ENCODE measurements at regions of chr12 and their contacts with region 1.

Region 1: DNA sequence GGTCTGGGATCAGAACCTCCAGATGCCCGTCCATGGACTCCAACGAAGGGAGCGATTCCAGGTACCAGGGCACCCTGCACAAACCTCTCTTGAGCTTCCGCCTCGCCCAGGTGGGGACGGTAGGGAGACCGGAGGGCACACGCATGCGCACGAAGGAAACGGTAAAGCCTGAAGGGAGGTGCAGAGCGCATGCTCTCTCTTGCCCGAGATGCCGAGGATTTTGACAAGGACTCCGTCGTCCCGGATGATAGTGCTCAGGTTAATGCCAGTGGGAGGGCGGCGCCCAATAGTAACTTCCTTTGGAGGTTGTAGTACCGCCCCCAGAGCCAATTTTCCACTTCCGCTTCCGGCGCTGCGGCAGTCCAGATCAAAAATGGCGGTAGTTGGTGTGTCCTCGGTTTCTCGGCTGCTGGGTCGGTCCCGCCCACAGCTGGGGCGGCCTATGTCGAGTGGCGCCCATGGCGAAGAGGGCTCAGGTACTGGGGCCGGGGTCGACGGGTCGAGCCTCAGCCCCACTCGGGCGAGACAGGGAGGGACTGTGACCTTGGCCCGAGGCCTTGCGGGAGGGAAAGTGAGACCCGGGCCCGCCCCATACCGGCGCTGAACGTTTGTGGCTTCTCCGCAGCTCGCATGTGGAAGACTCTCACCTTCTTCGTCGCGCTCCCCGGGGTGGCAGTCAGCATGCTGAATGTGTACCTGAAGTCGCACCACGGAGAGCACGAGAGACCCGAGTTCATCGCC is at the start of gene COX6A1:
- DNase-seq: peak; percentile 99
- ATAC-seq: peak; percentile 97
- H3K4me3 Mint-ChIP-seq: peak within 1 kb of the TSS; percentile 99
- H3K27ac Mint-ChIP-seq: peak within 1 kb of the TSS; percentile 99
- H3K4me1 Mint-ChIP-seq: peaks cover 23% of the 10 kb centered on the region
- H3K27me3 Mint-ChIP-seq: peaks cover 4% of the 10 kb centered on the region
- total RNA-seq, gene COX6A1: 424 to 495 TPM

Region 2: GRCh38 chr12:120301962-120302815 is 135.7 kb before region 1 on chr12 and contains the start of gene SIRT4:
- CTCF ChIA-PET with region 1: interaction called, 3 read pairs
- POLR2A ChIA-PET with region 1: no interaction called
- intact Hi-C with region 1: loop called in 1 of 2 experiments (anchors 2 kb)
- DNase-seq: peak; percentile 94
- ATAC-seq: peak; percentile 100
- H3K4me3 Mint-ChIP-seq: peak within 1 kb of the TSS; percentile 95
- H3K27ac Mint-ChIP-seq: peak within 1 kb of the TSS; percentile 97
- H3K4me1 Mint-ChIP-seq: peaks cover 9% of the 10 kb centered on the region
- H3K27me3 Mint-ChIP-seq: no peaks in the 10 kb centered on the region
- total RNA-seq, gene SIRT4: 2.2 to 4.0 TPM

Region 3: DNA sequence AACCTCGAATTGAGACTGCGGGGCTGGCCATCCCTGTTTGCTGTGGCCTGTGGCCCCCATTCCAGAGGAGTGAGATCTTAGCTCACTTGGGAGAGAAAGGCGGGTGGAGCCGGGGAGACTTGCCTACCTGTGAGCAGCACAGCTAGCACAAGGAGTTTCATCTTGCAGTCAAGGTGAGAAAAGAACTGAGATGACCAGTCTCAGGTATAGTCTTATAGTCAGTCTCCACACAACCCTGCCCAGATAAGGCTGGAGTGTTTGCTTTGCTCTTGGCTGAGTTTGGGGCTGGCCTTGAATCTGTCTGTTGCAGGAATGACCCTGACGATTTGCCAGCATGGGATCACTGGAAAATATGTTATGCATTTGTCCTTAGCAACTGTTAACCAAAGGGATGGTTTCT is 110.3 kb before region 1 on chr12 and contains the start of gene PLA2G1B:
- CTCF ChIA-PET with region 1: interaction called, 3 read pairs
- POLR2A ChIA-PET with region 1: no interaction called
- intact Hi-C with region 1: loop called in 1 of 2 experiments (anchors 5 kb)
- DNase-seq: no peak
- ATAC-seq: no peak
- H3K4me3 Mint-ChIP-seq: no peak within 1 kb of the TSS
- H3K27ac Mint-ChIP-seq: no peak within 1 kb of the TSS
- H3K4me1 Mint-ChIP-seq: peaks cover 3% of the 10 kb centered on the region
- H3K27me3 Mint-ChIP-seq: no peaks in the 10 kb centered on the region
- total RNA-seq, gene PLA2G1B: 0.51 TPM in 1 of 2 experiments, not detected in the other

Region 4: DNA sequence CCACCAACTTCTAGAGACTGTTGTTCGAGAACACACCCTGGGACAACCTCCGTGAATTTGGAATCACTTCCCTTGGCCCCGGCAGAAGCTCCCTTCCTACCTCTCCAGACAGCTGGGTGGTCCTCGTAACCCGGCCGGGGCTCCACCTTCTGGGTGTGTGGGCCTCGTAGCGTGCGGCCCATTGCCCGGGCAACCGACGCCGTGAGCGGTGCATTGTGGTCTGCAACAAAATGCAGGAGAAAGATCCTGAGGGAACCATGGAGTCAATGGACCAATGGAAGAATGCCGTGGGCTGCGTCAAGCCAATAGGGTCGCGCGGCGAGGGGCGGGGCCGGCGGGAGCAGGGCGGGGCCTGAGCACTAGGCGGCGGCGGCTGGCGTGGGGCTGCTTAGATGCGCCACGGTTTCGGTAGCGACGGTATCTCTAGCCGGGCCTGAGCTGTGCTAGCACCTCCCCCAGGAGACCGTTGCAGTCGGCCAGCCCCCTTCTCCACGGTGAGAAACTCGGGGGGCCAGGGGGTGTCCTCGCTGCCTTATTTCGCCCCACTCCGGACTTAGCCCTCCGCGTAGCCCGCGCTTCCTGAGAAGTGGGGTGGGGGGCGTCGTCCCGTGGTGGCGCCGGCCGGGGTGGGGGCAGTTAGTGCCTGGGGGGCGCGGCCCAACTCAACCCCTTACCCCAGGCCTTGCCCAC is 57.9 kb after region 1 on chr12 and contains the start of gene DYNLL1:
- CTCF ChIA-PET with region 1: interaction called, 5 read pairs
- POLR2A ChIA-PET with region 1: no interaction called
- intact Hi-C with region 1: loop called (anchors 1 to 2 kb)
- DNase-seq: peak; percentile 98
- ATAC-seq: peak; percentile 98
- H3K4me3 Mint-ChIP-seq: peak within 1 kb of the TSS; percentile 91
- H3K27ac Mint-ChIP-seq: peak within 1 kb of the TSS; percentile 75
- H3K4me1 Mint-ChIP-seq: peaks cover 31% of the 10 kb centered on the region
- H3K27me3 Mint-ChIP-seq: no peaks in the 10 kb centered on the region
- total RNA-seq, gene DYNLL1: 166 to 169 TPM

Region 5: DNA sequence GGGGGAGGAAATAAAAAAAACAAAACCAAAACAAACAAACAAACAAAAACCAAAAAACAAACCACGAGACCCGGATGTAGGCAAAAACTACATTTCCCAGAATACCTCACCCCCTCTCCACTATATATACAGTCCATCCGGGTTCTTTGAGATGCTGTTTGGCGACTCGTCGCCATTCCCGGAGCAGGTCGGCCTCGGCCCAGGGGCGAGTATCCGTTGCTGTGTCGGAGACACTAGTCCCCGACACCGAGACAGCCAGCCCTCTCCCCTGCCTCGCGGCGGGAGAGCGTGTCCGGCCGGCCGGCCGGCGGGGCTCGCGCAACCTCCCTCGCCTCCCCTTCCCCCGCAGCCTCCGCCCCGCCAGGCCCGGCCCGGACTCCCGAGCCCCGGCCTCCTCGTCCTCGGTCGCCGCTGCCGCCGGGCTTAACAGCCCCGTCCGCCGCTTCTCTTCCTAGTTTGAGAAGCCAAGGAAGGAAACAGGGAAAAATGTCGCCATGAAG is 96.3 kb after region 1 on chr12 and contains the start of gene RNF10:
- CTCF ChIA-PET with region 1: interaction called, 3 read pairs
- POLR2A ChIA-PET with region 1: no interaction called
- intact Hi-C with region 1: loop called (anchors 1 kb)
- DNase-seq: peak; percentile 82
- ATAC-seq: peak; percentile 67
- H3K4me3 Mint-ChIP-seq: peak within 1 kb of the TSS; percentile 87
- H3K27ac Mint-ChIP-seq: peak within 1 kb of the TSS; percentile 95
- H3K4me1 Mint-ChIP-seq: peaks cover 46% of the 10 kb centered on the region
- H3K27me3 Mint-ChIP-seq: no peaks in the 10 kb centered on the region
- total RNA-seq, gene RNF10: 177 to 184 TPM

Region 6: GRCh38 chr12:120702637-120703036 is 264.7 kb after region 1 on chr12:
- CTCF ChIA-PET with region 1: no interaction called
- POLR2A ChIA-PET with region 1: no interaction called
- intact Hi-C with region 1: no loop called
- DNase-seq: no peak
- ATAC-seq: no peak
- H3K4me3 Mint-ChIP-seq: no peak overlapping the region
- H3K27ac Mint-ChIP-seq: no peak overlapping the region
- H3K4me1 Mint-ChIP-seq: no peaks in the 10 kb centered on the region
- H3K27me3 Mint-ChIP-seq: no peaks in the 10 kb centered on the region